PC-9 (cell line): ENCODE measurements at regions of chr17 and their contacts with region 1.

Region 1: DNA sequence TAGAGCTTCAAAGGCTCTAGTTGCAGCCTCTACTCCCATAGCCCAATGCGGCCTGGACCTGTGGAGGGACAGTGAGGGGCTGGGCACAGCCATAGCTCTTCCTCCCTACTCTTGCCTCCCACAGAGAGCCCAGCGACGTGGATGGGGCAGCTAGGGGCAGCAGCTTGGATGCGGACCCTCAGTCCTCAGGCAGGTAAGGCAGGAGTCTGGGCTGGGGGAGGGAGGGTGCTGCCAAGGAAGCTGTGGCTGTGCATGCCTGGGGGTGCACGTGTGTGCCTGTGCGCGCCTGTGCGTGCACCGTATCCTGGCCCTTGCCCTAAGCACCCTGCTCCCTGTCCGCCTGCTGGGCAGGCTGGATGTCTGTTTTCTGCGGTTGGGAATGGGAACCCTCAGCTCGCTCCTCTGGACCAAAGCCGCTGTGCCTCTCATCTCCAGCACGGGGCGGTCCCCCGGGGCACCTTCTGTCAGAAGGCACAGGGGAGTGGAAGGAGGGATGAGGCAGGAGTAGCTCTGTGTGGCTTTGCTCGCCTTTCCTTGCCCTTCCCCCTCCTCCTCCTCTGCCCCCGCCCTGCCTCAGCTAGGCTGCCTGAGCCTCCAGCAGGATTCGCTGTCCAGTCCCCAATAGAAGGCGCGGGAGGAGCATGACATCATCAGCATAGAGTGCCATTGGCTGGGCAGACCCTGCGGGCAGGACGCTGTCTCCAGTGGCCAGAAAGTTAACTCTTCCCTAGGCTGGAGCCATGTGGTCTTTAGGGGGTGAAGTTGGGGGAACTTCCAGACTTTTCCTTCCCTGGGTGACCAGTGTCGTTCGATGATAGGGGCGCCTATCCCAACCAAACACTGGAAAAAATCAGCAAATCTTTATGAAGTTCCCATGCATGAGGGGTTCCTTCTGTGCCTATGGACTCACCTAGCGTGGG is 797 bp downstream of the PRCD start:
- DNase-seq: peak; percentile 83 to 89
- H3K4me3 ChIP-seq: peak overlapping the region; percentile 38; the same call in 1 of the 2 replicates
- H3K27ac ChIP-seq: no peak overlapping the region
- H3K4me1 ChIP-seq: peaks cover 4% of the 10 kb centered on the region; the same call in 1 of the 2 replicates
- H3K27me3 ChIP-seq: no peaks in the 10 kb centered on the region
- CTCF ChIP-seq: no peak

Region 2: DNA sequence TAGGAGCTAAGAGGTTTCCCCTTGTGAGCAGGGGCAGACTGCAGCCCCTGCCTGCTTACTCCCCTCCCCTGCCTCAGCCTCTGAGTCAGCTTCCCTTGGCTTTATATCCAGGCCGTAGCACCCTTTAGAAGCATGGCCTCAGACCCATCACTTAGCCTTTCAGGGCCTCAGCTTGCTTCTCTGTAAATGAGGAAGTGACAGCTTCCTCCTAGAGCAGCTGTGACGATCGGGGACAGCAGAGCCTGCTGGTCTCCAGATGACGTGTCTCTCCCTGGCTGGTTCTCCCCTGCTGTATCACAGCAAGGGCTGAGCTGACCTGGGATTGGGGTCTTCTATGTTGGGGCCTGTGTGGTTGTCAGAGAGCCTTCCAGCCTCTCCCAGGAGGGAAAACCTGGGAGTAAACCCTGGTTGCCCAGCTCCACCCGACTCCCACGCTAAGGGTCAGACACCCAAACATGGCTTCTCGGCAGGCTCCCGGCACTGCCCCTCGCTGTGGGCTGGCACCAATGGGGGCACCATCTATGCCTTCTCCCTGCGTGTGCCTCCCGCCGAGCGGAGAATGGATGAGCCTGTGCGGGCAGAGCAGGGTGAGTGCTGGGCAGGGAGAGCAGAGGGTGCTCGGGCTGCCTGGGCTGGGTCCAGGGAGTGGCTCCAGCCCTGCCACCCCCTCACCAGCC is 969.3 kb before region 1 on chr17:
- CTCF ChIA-PET with region 1: interaction called, 10 read pairs
- POLR2A ChIA-PET with region 1: no interaction called
- intact Hi-C with region 1: no loop called
- DNase-seq: no peak
- H3K4me3 ChIP-seq: no peak overlapping the region
- H3K27ac ChIP-seq: no peak overlapping the region
- H3K4me1 ChIP-seq: no peaks in the 10 kb centered on the region
- H3K27me3 ChIP-seq: no peaks in the 10 kb centered on the region
- CTCF ChIP-seq: no peak

Region 3: GRCh38 chr17:76307299-76307965 is 233.2 kb before region 1 on chr17:
- CTCF ChIA-PET with region 1: no interaction called
- POLR2A ChIA-PET with region 1: no interaction called
- intact Hi-C with region 1: no loop called
- DNase-seq: no peak
- H3K4me3 ChIP-seq: no peak overlapping the region
- H3K27ac ChIP-seq: no peak overlapping the region
- H3K4me1 ChIP-seq: no peaks in the 10 kb centered on the region
- H3K27me3 ChIP-seq: no peaks in the 10 kb centered on the region
- CTCF ChIP-seq: no peak

Region 4: DNA sequence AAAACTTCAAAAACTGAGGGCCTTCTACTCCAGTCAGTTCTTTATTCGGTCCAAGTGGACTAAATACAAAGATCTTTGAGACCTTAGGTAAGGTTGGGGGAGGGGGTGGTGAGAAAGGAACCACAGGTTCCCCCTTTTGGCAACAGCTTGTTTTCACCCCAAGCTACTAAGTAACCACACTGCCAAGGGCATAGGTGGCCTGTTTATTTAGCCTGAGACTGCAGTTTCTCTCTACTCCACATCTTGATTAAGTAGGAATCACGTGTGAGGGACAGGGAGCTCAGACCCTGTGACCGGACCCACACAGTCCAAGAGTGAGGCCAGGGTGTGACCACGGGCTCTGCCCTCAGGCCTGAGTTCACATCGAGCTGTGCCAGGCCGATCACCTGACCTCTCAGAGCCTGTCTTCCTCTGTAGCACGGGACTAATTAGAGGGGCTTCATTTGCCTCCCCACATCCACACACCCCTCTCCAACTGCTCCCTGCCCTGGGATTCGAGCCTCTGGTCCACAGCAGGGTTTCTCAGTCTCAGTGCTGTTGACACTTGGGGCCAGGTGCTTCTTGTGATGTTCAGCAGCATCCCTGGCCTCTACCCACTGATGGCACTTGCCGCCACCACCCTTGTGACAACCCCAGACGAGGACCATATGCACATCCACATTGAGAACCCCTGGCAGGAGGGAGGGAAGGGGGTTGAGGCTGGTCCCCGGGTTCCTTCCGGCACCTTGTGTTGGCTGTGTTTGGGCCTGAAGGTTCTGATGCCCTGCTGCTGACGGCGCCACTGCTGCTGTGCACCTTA is 27.2 kb after region 1 on chr17:
- CTCF ChIA-PET with region 1: no interaction called
- POLR2A ChIA-PET with region 1: no interaction called
- intact Hi-C with region 1: no loop called
- DNase-seq: no peak
- H3K4me3 ChIP-seq: no peak overlapping the region
- H3K27ac ChIP-seq: no peak overlapping the region
- H3K4me1 ChIP-seq: no peaks in the 10 kb centered on the region
- H3K27me3 ChIP-seq: no peaks in the 10 kb centered on the region
- CTCF ChIP-seq: no peak